ENCODE measurements at regions of chr5 and their contacts with region 1.

Region 1: DNA sequence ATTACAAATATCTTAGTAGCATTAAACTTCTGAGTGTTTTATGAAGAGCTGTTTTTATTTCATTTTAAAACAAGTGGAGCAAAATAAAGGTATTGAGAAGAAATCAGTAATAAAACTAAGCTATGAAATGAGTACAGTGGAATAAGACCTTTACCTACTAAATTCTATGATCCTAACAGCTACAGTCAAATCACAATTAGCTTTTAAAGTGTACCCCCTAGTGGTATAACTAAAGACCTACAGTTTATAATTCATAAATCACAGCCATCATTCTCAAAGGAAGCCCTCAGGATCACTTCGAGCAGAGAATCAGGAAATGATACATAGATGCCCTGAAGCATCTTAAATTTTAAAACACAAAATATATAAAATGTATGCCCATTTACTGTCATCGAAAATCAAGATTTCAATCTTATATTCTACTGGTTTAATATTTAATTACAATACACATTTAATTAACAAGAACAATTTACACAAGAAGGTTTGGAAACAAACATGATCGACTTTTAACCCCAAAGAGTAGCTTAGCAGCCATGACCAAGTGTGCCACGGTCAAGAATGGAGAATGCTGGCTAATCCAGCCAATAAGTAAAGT is 12.3 kb downstream of the CCNH start:
- DNase-seq: peak in 4 of 5 donors; percentile 50 to 59 (median 55)
- H3K4me3 ChIP-seq: no peak overlapping the region
- H3K4me3 Mint-ChIP-seq: peak overlapping the region in 2 of 8 donors; percentile 21 to 60
- H3K27ac ChIP-seq: peak overlapping the region; percentile 5
- H3K27ac Mint-ChIP-seq: peak overlapping the region in 5 of 7 donors; percentile 12 to 64 (median 62)
- H3K4me1 ChIP-seq: peaks cover 24% of the 10 kb centered on the region
- H3K4me1 Mint-ChIP-seq: peaks cover 17 to 58% (median 29%) of the 10 kb centered on the region in 4 donors
- H3K27me3 ChIP-seq: no peaks in the 10 kb centered on the region
- H3K27me3 Mint-ChIP-seq: no peaks in the 10 kb centered on the region

Region 2: GRCh38 chr5:86968301-86968753 is 432.1 kb before region 1 on chr5:
- CTCF ChIA-PET with region 1: interaction called, 13 read pairs
- POLR2A ChIA-PET with region 1: no interaction called
- intact Hi-C with region 1: loop called (anchors 1 kb)
- DNase-seq: peak in 4 of 5 donors; percentile 21 to 25 (median 24)
- H3K4me3 ChIP-seq: no peak overlapping the region
- H3K4me3 Mint-ChIP-seq: no peak overlapping the region
- H3K27ac ChIP-seq: no peak overlapping the region
- H3K27ac Mint-ChIP-seq: peak overlapping the region in 1 of 7 donors; percentile 24
- H3K4me1 ChIP-seq: no peaks in the 10 kb centered on the region
- H3K4me1 Mint-ChIP-seq: peaks cover 0 to 10% (median 5%) of the 10 kb centered on the region in 4 donors
- H3K27me3 ChIP-seq: no peaks in the 10 kb centered on the region
- H3K27me3 Mint-ChIP-seq: peaks cover 2 to 5% of the 10 kb centered on the region in 2 donors

Region 3: DNA sequence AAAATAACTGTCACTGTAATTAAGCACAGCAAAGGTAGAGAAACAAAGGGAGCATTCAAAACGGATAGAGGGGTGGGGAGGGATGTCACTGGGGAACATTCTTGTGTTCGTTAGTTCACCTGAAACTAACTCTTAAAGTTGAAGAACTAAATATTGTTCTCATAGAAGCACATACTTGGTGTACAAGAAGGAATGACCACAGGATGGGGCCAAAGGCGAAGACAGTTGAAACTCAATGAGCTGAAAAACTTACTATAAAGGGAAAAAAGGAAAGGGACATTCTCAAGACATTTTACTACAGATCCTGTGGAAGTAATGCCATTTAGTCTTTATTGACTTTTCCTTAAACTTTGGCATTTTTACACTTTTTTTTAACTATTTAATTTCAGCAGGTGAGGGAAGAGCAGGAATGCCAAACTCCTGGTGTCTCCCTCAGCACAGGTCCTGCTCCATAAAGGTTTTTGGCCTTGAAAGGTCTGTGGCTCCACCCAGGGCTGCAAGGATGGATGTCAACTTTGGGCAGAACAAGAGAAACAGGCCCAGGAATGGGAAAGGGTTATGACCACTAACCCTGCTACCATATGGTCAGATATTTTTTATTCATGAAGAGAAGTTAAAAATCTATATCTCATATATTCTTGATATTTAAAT is 330.3 kb before region 1 on chr5:
- CTCF ChIA-PET with region 1: interaction called, 26 read pairs
- POLR2A ChIA-PET with region 1: interaction called, 4 read pairs
- intact Hi-C with region 1: loop called (anchors 1 kb)
- DNase-seq: peak in 1 of 5 donors; percentile 3
- H3K4me3 ChIP-seq: no peak overlapping the region
- H3K4me3 Mint-ChIP-seq: no peak overlapping the region
- H3K27ac ChIP-seq: no peak overlapping the region
- H3K27ac Mint-ChIP-seq: peak overlapping the region in 1 of 7 donors; percentile 69
- H3K4me1 ChIP-seq: peaks cover 13% of the 10 kb centered on the region
- H3K4me1 Mint-ChIP-seq: peaks cover 14 to 26% (median 22%) of the 10 kb centered on the region in 4 donors
- H3K27me3 ChIP-seq: no peaks in the 10 kb centered on the region
- H3K27me3 Mint-ChIP-seq: no peaks in the 10 kb centered on the region

Region 4: GRCh38 chr5:87327998-87328397 is 72.4 kb before region 1 on chr5:
- CTCF ChIA-PET with region 1: no interaction called
- POLR2A ChIA-PET with region 1: no interaction called
- intact Hi-C with region 1: no loop called
- DNase-seq: no peak
- H3K4me3 ChIP-seq: no peak overlapping the region
- H3K4me3 Mint-ChIP-seq: no peak overlapping the region
- H3K27ac ChIP-seq: no peak overlapping the region
- H3K27ac Mint-ChIP-seq: peak overlapping the region in 6 of 7 donors; percentile 1 to 78 (median 27)
- H3K4me1 ChIP-seq: peaks cover 32% of the 10 kb centered on the region
- H3K4me1 Mint-ChIP-seq: peaks cover 45 to 67% (median 57%) of the 10 kb centered on the region in 4 donors
- H3K27me3 ChIP-seq: no peaks in the 10 kb centered on the region
- H3K27me3 Mint-ChIP-seq: no peaks in the 10 kb centered on the region

Region 5: GRCh38 chr5:87390075-87390887 is 10.1 kb before region 1 on chr5:
- CTCF ChIA-PET with region 1: interaction called, 13 read pairs
- POLR2A ChIA-PET with region 1: interaction called, 5 read pairs
- intact Hi-C with region 1: no loop called
- DNase-seq: no peak
- H3K4me3 ChIP-seq: no peak overlapping the region
- H3K4me3 Mint-ChIP-seq: no peak overlapping the region
- H3K27ac ChIP-seq: no peak overlapping the region
- H3K27ac Mint-ChIP-seq: peak overlapping the region in 5 of 7 donors; percentile 49 to 65 (median 54)
- H3K4me1 ChIP-seq: no peaks in the 10 kb centered on the region
- H3K4me1 Mint-ChIP-seq: peaks cover 11 to 37% (median 20%) of the 10 kb centered on the region in 4 donors
- H3K27me3 ChIP-seq: no peaks in the 10 kb centered on the region
- H3K27me3 Mint-ChIP-seq: no peaks in the 10 kb centered on the region